Caco-2 (cell line): ENCODE measurements at regions of chr14 and their contacts with region 1.

Region 1: GRCh38 chr14:93206793-93207467 is at the starts of genes GON7 and UBR7:
- DNase-seq: peak; percentile 96 to 97
- H3K4me3 ChIP-seq: peak within 1 kb of the TSS; percentile 98
- H3K4me3 Mint-ChIP-seq: peak within 1 kb of the TSS; percentile 72
- H3K27ac Mint-ChIP-seq: peak within 1 kb of the TSS; percentile 97
- H3K4me1 ChIP-seq: no peaks in the 10 kb centered on the region; the same call in 1 of the 2 replicates
- H3K4me1 Mint-ChIP-seq: no peaks in the 10 kb centered on the region
- H3K27me3 ChIP-seq: no peaks in the 10 kb centered on the region
- H3K27me3 Mint-ChIP-seq: no peaks in the 10 kb centered on the region
- CTCF ChIP-seq: peak; percentile 32 to 39
- total RNA-seq, gene GON7: 7.7 and 10.8 TPM in 2 replicates
- total RNA-seq, gene UBR7: 14.3 and 19.6 TPM in 2 replicates

Region 2: DNA sequence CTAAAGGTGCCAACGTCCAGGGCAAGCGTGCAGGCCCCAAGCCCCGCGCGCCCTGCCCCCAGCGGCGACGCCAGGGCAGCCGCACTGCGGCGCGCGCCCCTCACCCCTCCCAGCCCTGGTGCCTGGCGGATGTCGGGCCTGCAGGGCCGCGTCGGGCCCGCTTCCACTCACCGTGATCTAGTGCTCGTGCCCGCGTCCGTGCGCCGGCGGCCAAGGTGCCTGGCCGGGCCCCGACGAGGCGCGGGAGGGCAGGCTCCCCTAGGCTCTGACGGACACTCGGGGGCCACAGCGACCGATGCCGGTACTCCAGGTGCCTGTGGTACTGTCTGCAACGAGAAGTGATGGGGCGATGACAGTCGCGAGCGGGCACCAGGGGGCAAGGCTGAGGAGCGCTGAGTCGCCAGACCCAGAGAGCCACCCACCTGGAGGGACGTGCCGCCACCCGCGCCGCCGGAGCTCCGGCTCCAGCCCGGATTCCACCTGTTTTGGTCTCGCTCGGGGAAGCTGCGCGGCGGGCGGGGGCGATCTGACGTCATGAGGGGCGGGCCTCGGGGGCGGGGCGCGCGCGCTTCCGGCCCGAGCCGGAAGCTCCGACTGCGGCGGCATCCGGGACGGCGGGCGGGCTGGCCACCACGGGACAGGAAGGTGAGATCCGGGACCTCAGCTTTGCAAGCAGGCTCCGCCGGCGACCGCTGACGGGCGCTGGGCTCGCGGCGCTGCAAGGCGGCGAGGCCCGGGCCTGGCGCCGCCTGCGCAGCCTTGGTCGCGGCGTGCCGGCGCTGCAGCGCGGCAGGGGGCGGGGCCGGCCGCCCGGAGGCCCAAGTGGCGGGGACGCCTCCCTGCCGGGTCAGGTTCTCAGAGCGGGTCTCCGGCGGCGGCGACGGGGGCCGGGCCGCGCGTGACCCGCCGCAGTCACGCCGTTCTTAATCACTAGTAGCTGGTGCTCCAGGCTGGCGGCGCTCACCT is 22.3 kb before region 1 on chr14 and contains the starts of genes LYSET and MOAP1:
- CTCF ChIA-PET with region 1: interaction called, 24 read pairs
- POLR2A ChIA-PET with region 1: interaction called, 24 read pairs
- intact Hi-C with region 1: no loop called
- DNase-seq: peak; percentile 88 to 91
- H3K4me3 ChIP-seq: peak within 1 kb of the TSS; percentile 100
- H3K4me3 Mint-ChIP-seq: peak within 1 kb of the TSS; percentile 86
- H3K27ac Mint-ChIP-seq: peak within 1 kb of the TSS; percentile 8
- H3K4me1 ChIP-seq: no peaks in the 10 kb centered on the region; the same call in 1 of the 2 replicates
- H3K4me1 Mint-ChIP-seq: no peaks in the 10 kb centered on the region
- H3K27me3 ChIP-seq: no peaks in the 10 kb centered on the region
- H3K27me3 Mint-ChIP-seq: no peaks in the 10 kb centered on the region
- CTCF ChIP-seq: peak; percentile 6 to 22
- total RNA-seq, gene LYSET: 17.3 and 17.4 TPM in 2 replicates
- total RNA-seq, gene MOAP1: 11.5 and 12.2 TPM in 2 replicates

Region 3: GRCh38 chr14:93219103-93219726 is 12.3 kb after region 1 on chr14:
- CTCF ChIA-PET with region 1: interaction called, 33 read pairs
- POLR2A ChIA-PET with region 1: no interaction called
- intact Hi-C with region 1: no loop called
- DNase-seq: peak; percentile 53 to 58
- H3K4me3 ChIP-seq: no peak overlapping the region
- H3K4me3 Mint-ChIP-seq: no peak overlapping the region
- H3K27ac Mint-ChIP-seq: no peak overlapping the region
- H3K4me1 ChIP-seq: no peaks in the 10 kb centered on the region
- H3K4me1 Mint-ChIP-seq: no peaks in the 10 kb centered on the region
- H3K27me3 ChIP-seq: no peaks in the 10 kb centered on the region
- H3K27me3 Mint-ChIP-seq: no peaks in the 10 kb centered on the region
- CTCF ChIP-seq: peak; percentile 47 to 77

Region 4: DNA sequence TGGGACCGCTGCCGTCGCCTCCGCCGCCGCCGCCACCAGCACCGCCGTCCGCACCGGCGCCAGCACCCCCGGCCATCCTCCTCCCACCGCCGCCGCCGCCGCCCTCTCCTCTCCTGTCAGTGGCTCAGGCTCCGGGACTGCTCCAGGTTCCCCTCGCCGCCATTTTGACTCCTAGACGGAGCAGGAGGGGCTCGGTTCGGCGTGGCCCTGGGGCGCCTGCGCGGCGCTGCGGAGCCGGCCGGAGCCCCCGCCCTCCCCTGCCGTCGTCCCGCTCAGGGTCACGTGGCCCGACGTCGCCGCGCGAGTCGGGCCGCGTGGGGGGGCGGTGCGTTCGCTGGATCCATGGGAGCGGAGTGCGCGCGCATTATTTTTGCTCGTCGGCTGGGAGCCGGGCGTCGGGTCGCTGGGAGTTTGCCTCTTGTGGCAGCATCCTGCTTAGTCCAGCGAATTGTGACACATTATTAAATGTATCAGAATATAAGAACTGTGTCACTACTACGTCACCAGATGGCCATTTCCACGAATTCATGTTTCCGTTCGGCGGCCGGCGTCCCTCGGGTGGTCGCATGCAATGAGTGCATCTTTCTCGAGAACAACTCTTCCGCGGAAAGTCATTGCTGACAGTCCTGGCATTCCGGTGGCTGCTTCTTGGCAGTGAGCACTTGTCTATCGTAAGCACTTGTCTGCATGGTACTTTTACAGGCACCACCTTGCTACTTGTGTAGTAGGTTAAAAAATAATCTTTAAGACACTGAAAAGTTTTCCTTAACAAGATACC is 126.1 kb after region 1 on chr14 and contains the start of gene BTBD7:
- CTCF ChIA-PET with region 1: no interaction called
- POLR2A ChIA-PET with region 1: no interaction called
- intact Hi-C with region 1: loop called (anchors 5 kb)
- DNase-seq: peak; percentile 93 to 96
- H3K4me3 ChIP-seq: peak within 1 kb of the TSS; percentile 53
- H3K4me3 Mint-ChIP-seq: peak within 1 kb of the TSS; percentile 82
- H3K27ac Mint-ChIP-seq: peak within 1 kb of the TSS; percentile 95
- H3K4me1 ChIP-seq: peaks cover 21% of the 10 kb centered on the region
- H3K4me1 Mint-ChIP-seq: peaks cover 19% of the 10 kb centered on the region
- H3K27me3 ChIP-seq: no peaks in the 10 kb centered on the region
- H3K27me3 Mint-ChIP-seq: no peaks in the 10 kb centered on the region
- CTCF ChIP-seq: peak; percentile 12 to 22
- total RNA-seq, gene BTBD7: 28.8 and 32.2 TPM in 2 replicates

Region 5: DNA sequence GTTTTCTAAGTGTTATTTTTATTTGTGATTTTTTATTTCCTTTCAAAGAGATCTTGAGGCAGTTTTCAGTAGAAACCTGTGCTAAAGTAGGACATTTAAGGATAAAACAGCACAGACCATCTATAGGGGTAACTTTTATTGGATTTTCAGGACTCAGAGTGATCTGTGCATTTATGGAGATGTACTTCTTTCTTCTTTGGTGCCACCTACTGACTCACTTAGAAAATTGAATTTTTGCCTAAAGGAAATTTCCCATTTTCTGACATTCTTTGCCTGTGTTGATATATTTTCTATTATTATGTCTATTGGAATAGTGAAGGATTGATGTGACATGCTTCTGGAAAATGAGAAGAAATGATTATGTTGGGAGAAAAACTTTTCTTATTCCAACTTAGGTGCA is 336.8 kb after region 1 on chr14:
- CTCF ChIA-PET with region 1: no interaction called
- POLR2A ChIA-PET with region 1: no interaction called
- intact Hi-C with region 1: loop called (anchors 1 kb)
- DNase-seq: peak in 1 of 2 experiments; percentile 13
- H3K4me3 ChIP-seq: no peak overlapping the region
- H3K4me3 Mint-ChIP-seq: no peak overlapping the region
- H3K27ac Mint-ChIP-seq: no peak overlapping the region
- H3K4me1 ChIP-seq: no peaks in the 10 kb centered on the region
- H3K4me1 Mint-ChIP-seq: no peaks in the 10 kb centered on the region
- H3K27me3 ChIP-seq: no peaks in the 10 kb centered on the region
- H3K27me3 Mint-ChIP-seq: peaks cover 11% of the 10 kb centered on the region
- CTCF ChIP-seq: peak; percentile 45 to 54

Region 6: GRCh38 chr14:93619176-93619793 is 412.4 kb after region 1 on chr14:
- CTCF ChIA-PET with region 1: interaction called, 6 read pairs
- POLR2A ChIA-PET with region 1: no interaction called
- intact Hi-C with region 1: loop called (anchors 1 kb)
- DNase-seq: peak; percentile 37 to 45
- H3K4me3 ChIP-seq: no peak overlapping the region
- H3K4me3 Mint-ChIP-seq: no peak overlapping the region
- H3K27ac Mint-ChIP-seq: no peak overlapping the region
- H3K4me1 ChIP-seq: no peaks in the 10 kb centered on the region
- H3K4me1 Mint-ChIP-seq: no peaks in the 10 kb centered on the region
- H3K27me3 ChIP-seq: 0 out of 2 replicates have a peak, but pooled peaks cover 1% of the 10 kb centered on the region
- H3K27me3 Mint-ChIP-seq: peaks cover 9% of the 10 kb centered on the region
- CTCF ChIP-seq: peak; percentile 40 to 66